HepG2 (cell line): ENCODE measurements at regions of chr17 and their contacts with region 1.

Region 1: GRCh38 chr17:38702166-38702899 is 2.7 kb upstream of the MLLT6 start:
- DNase-seq: peak; percentile 86
- ATAC-seq: peak; percentile 47
- H3K4me3 ChIP-seq: peak overlapping the region; percentile 63 to 99 (median 71)
- H3K27ac ChIP-seq: peak overlapping the region; percentile 99
- H3K4me1 ChIP-seq: peaks cover 67% of the 10 kb centered on the region
- H3K27me3 ChIP-seq: no peaks in the 10 kb centered on the region; a peak in 1 of 5 replicates
- CTCF ChIP-seq: 0 out of 2 replicates have a peak, but pooled peaks have one; percentile 2
- EP300 ChIP-seq: peak in 1 of 2 experiments; percentile 7; a peak in 2 of 4 replicates
- POLR2A ChIP-seq: peak; percentile 77 to 94
- RAD21 ChIP-seq: peak; percentile 23; the same call in 1 of the 2 replicates

Region 2: GRCh38 chr17:38660097-38661025 is 42.0 kb before region 1 on chr17:
- CTCF ChIA-PET with region 1: no interaction called
- POLR2A ChIA-PET with region 1: interaction called, 17 read pairs
- in situ Hi-C with region 1: no loop called
- intact Hi-C with region 1: loop called (anchors 1 kb)
- DNase-seq: no peak
- ATAC-seq: no peak
- H3K4me3 ChIP-seq: no peak overlapping the region
- H3K27ac ChIP-seq: peak overlapping the region; percentile 75
- H3K4me1 ChIP-seq: peaks cover 85% of the 10 kb centered on the region
- H3K27me3 ChIP-seq: no peaks in the 10 kb centered on the region
- CTCF ChIP-seq: no peak
- EP300 ChIP-seq: no peak
- POLR2A ChIP-seq: no peak
- RAD21 ChIP-seq: 0 out of 2 replicates have a peak, but pooled peaks have one; percentile 19

Region 3: GRCh38 chr17:38681096-38681495 is 21.2 kb before region 1 on chr17:
- CTCF ChIA-PET with region 1: interaction called, 3 read pairs
- POLR2A ChIA-PET with region 1: interaction called, 88 read pairs
- in situ Hi-C with region 1: no loop called
- intact Hi-C with region 1: loop called (anchors 1 kb)
- DNase-seq: no peak
- ATAC-seq: no peak
- H3K4me3 ChIP-seq: no peak overlapping the region
- H3K27ac ChIP-seq: no peak overlapping the region
- H3K4me1 ChIP-seq: peaks cover 59% of the 10 kb centered on the region
- H3K27me3 ChIP-seq: peaks cover 2 to 13% of the 10 kb centered on the region in 2 experiments; a peak in 4 of 5 replicates
- CTCF ChIP-seq: no peak
- EP300 ChIP-seq: no peak
- POLR2A ChIP-seq: no peak
- RAD21 ChIP-seq: no peak

Region 4: GRCh38 chr17:38729886-38730525 is 27.7 kb after region 1 on chr17 and contains the start of gene CISD3:
- CTCF ChIA-PET with region 1: interaction called, 4 read pairs
- POLR2A ChIA-PET with region 1: interaction called, 43 read pairs
- in situ Hi-C with region 1: no loop called
- intact Hi-C with region 1: loop called (anchors 2 kb)
- DNase-seq: peak; percentile 81
- ATAC-seq: peak; percentile 69
- H3K4me3 ChIP-seq: peak within 1 kb of the TSS; percentile 67 to 100 (median 95)
- H3K27ac ChIP-seq: peak within 1 kb of the TSS; percentile 97
- H3K4me1 ChIP-seq: peaks cover 54% of the 10 kb centered on the region
- H3K27me3 ChIP-seq: no peaks in the 10 kb centered on the region
- CTCF ChIP-seq: peak; percentile 79
- EP300 ChIP-seq: peak in 1 of 2 experiments; percentile 37; a peak in 2 of 4 replicates
- POLR2A ChIP-seq: peak; percentile 22 to 63; a peak in 3 of 4 replicates
- RAD21 ChIP-seq: peak; percentile 97
- total RNA-seq, gene CISD3: 34.1 and 42.6 TPM in 2 replicates